ENCODE measurements at regions of chr10 and their contacts with region 1.

Region 1: GRCh38 chr10:132223156-132223590 is 36.4 kb downstream of the DPYSL4 start:
- DNase-seq: peak; percentile 70
- H3K4me3 Mint-ChIP-seq: no peak overlapping the region
- H3K27ac Mint-ChIP-seq: no peak overlapping the region
- H3K4me1 Mint-ChIP-seq: no peaks in the 10 kb centered on the region
- H3K27me3 Mint-ChIP-seq: no peaks in the 10 kb centered on the region
- CTCF ChIP-seq: peak; percentile 42

Region 2: GRCh38 chr10:132306864-132307751 is 83.9 kb after region 1 on chr10:
- CTCF ChIA-PET with region 1: no interaction called
- intact Hi-C with region 1: no loop called
- DNase-seq: peak; percentile 75
- H3K4me3 Mint-ChIP-seq: peak overlapping the region; percentile 80
- H3K27ac Mint-ChIP-seq: peak overlapping the region; percentile 35
- H3K4me1 Mint-ChIP-seq: peaks cover 15% of the 10 kb centered on the region
- H3K27me3 Mint-ChIP-seq: no peaks in the 10 kb centered on the region
- CTCF ChIP-seq: no peak

Region 3: GRCh38 chr10:132353456-132354355 is 130.5 kb after region 1 on chr10:
- CTCF ChIA-PET with region 1: no interaction called
- intact Hi-C with region 1: loop called (anchors 2 kb)
- DNase-seq: no peak
- H3K4me3 Mint-ChIP-seq: no peak overlapping the region
- H3K27ac Mint-ChIP-seq: no peak overlapping the region
- H3K4me1 Mint-ChIP-seq: no peaks in the 10 kb centered on the region
- H3K27me3 Mint-ChIP-seq: no peaks in the 10 kb centered on the region
- CTCF ChIP-seq: no peak

Measured in Calu3 (cell line).